MCF 10A (cell line): ENCODE measurements at regions of chr3 and their contacts with region 1.

Region 1: DNA sequence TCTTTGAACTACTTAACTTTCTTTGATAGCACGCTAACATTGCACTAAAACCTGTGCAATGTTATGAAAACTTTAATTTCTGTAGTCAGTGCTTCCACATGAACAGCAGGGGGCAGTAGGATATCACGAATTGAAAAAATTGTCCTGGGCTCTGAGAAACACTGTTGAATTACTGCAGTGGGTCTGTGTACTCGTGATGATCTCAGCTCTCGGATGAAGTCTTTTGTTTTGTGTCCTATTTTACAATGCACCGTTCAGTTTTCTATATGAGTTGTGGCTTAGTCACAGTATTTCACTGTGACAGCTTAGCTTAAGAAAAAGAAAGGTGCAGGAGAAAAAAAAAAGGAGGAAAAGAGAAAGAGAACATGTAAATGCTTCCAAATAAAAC is 141.3 kb upstream of the CCDC54 start:
- DNase-seq: peak; percentile 90
- H3K4me3 Mint-ChIP-seq: peak overlapping the region; percentile 71
- H3K27ac Mint-ChIP-seq: peak overlapping the region; percentile 84
- H3K4me1 Mint-ChIP-seq: peaks cover 31% of the 10 kb centered on the region
- H3K27me3 Mint-ChIP-seq: no peaks in the 10 kb centered on the region
- CTCF ChIP-seq: peak; percentile 83

Region 2: DNA sequence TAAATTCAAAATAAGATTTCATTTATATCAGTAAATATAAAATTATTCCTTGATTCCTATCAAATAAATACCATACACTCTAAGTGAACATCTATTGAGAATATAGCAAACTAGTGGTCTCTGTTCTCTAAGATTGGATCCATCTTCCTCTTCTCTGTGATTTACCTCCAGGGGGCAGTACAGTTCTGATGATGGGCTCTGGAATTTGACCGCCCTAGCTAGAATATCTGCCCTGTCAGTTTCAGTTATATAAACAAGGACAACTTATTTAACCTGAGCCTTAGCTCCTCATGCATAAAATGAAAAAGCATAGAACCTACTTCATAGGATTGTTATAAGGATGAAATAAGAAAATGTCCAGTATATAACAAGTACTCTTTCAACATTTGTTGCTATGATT is 29.8 kb before region 1 on chr3:
- CTCF ChIA-PET with region 1: interaction called, 50 read pairs
- POLR2A ChIA-PET with region 1: interaction called, 79 read pairs
- intact Hi-C with region 1: loop called (anchors 1 kb)
- DNase-seq: peak; percentile 85
- H3K4me3 Mint-ChIP-seq: no peak overlapping the region
- H3K27ac Mint-ChIP-seq: no peak overlapping the region
- H3K4me1 Mint-ChIP-seq: peaks cover 42% of the 10 kb centered on the region
- H3K27me3 Mint-ChIP-seq: no peaks in the 10 kb centered on the region
- CTCF ChIP-seq: peak; percentile 57

Region 3: GRCh38 chr3:107264888-107265287 is 29.0 kb after region 1 on chr3:
- CTCF ChIA-PET with region 1: interaction called, 15 read pairs
- POLR2A ChIA-PET with region 1: interaction called, 23 read pairs
- intact Hi-C with region 1: loop called (anchors 2 kb)
- DNase-seq: peak; percentile 52
- H3K4me3 Mint-ChIP-seq: peak overlapping the region; percentile 28
- H3K27ac Mint-ChIP-seq: peak overlapping the region; percentile 88
- H3K4me1 Mint-ChIP-seq: peaks cover 14% of the 10 kb centered on the region
- H3K27me3 Mint-ChIP-seq: no peaks in the 10 kb centered on the region
- CTCF ChIP-seq: no peak

Region 4: GRCh38 chr3:107421170-107421792 is 185.4 kb after region 1 on chr3:
- CTCF ChIA-PET with region 1: interaction called, 23 read pairs
- POLR2A ChIA-PET with region 1: interaction called, 11 read pairs
- intact Hi-C with region 1: loop called (anchors 1 kb)
- DNase-seq: peak; percentile 81
- H3K4me3 Mint-ChIP-seq: peak overlapping the region; percentile 63
- H3K27ac Mint-ChIP-seq: peak overlapping the region; percentile 75
- H3K4me1 Mint-ChIP-seq: peaks cover 18% of the 10 kb centered on the region
- H3K27me3 Mint-ChIP-seq: no peaks in the 10 kb centered on the region
- CTCF ChIP-seq: peak; percentile 62

Region 5: DNA sequence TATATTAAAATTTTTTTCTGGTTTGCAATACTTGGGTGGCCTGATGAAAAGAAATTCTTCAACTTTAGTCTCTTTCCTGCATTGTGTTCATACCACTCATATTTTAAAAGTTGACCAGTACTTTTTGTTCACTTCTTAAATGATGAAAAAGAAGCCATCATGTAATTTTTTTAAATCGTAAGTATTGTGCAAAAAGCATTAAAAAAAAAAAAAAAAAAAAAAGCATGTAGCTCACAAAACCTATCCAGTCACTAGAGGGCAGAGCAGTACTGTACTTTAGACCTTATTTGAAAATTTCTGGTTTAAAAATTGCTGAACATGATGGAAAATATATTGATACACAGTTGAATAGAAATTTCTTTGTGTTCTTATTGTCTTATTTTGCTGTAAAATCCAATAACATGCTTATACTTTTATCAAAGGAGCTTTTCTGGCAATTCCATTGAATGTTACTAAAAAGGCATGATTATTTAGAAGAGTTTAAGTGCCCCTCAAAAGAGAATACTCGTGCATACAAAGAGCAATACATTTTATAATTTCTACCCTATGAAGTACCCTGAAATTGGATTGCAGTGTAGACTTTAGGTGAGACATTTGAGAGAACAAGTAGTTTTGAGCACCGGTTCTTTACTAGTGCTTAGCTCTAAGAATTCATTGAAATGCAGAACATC is 424.5 kb after region 1 on chr3:
- CTCF ChIA-PET with region 1: interaction called, 3 read pairs
- POLR2A ChIA-PET with region 1: interaction called, 8 read pairs
- intact Hi-C with region 1: loop called (anchors 2 kb)
- DNase-seq: peak; percentile 54
- H3K4me3 Mint-ChIP-seq: no peak overlapping the region
- H3K27ac Mint-ChIP-seq: no peak overlapping the region
- H3K4me1 Mint-ChIP-seq: peaks cover 29% of the 10 kb centered on the region
- H3K27me3 Mint-ChIP-seq: no peaks in the 10 kb centered on the region
- CTCF ChIP-seq: peak; percentile 53

Region 6: DNA sequence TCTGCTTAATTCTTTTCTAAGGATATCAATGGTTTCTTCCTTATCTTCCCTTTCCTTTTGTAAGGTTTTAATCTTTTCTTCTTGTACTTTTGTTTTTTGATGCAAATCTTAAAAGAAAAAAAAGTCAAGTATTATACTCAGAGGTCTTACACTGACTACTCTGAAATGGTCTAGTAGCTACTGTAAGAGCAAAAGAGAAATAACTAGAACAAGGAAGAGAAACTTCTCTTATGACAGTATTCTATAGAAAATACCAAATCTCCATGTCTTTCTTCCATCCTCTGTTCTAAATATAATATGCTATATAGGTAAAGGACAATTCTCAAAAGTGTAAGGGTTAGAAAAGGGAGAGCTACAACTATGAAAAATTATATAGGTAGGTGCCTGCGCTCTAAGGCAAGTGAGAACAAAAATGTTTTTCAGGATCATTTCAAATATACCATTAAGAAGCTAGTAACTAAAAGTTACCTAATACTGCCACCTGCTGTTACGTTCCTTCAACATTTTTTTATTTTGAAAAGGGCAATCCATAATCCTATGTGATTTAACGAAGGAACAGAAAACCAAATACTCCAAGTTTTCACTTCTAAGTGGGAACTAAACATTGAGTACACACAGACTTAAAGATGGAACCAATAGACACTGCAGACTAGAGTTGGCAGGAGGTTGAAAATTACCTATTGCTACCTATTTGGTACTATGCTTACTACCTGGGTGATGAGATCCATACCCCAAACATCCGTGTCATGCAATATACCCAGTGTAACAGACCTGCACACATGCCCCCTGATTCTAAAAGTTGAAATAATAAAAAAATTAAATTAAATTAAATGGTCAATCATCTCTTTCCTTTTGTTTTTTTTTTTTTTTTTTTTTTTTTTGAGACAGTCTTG is 1316.6 kb after region 1 on chr3:
- CTCF ChIA-PET with region 1: no interaction called
- POLR2A ChIA-PET with region 1: interaction called, 3 read pairs
- intact Hi-C with region 1: loop called (anchors 2 kb)
- DNase-seq: peak; percentile 61
- H3K4me3 Mint-ChIP-seq: no peak overlapping the region
- H3K27ac Mint-ChIP-seq: peak overlapping the region; percentile 28
- H3K4me1 Mint-ChIP-seq: peaks cover 7% of the 10 kb centered on the region
- H3K27me3 Mint-ChIP-seq: no peaks in the 10 kb centered on the region
- CTCF ChIP-seq: peak; percentile 40